ENCODE measurements at regions of chr3 and their contacts with region 1.

Region 1: DNA sequence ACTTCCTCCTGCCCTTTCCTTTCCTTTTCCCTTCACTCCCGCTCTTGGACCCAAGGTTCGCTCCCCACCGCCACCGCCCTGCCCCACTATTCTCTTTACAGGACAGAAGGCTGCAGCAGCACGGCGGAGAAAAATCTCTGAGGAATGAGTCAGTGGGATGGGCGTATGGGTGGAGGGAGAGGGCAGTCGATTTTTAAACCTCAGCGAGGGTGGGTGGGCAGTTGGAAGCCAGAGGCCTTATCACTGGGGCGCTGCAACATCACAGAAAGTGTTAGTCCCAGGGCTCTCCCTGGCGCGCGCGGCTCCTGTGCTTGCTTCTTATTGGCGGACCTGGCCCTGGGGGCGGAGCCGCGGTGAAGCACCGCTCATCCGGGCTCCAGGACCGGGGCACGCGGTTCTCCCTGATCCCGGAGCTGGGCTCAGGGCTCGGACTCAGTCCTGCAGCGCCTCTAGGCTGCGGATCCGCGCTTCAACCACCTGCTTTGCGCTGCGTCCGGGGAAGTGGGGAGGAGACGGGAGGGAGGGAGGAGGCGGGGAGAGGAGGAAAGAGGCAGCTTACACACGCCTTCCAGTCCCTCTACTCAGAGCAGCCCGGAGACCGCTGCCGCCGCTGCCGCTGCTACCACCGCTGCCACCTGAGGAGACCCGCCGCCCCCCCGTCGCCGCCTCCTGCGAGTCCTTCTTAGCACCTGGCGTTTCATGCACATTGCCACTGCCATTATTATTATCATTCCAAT is at the start of gene ALCAM:
- DNase-seq: peak; percentile 41 to 89 (median 63)
- ATAC-seq: peak; percentile 60
- H3K4me3 ChIP-seq: peak within 1 kb of the TSS; percentile 73
- H3K4me3 Mint-ChIP-seq: peak within 1 kb of the TSS; percentile 92
- H3K27ac ChIP-seq: peak within 1 kb of the TSS; percentile 76 to 85
- H3K27ac Mint-ChIP-seq: peak within 1 kb of the TSS; percentile 91
- H3K4me1 ChIP-seq: peaks cover 38% of the 10 kb centered on the region
- H3K4me1 Mint-ChIP-seq: peaks cover 32% of the 10 kb centered on the region
- H3K27me3 ChIP-seq: peaks cover 0 to 10% of the 10 kb centered on the region in 2 experiments
- H3K27me3 Mint-ChIP-seq: peaks cover 33% of the 10 kb centered on the region
- CTCF ChIP-seq: no peak
- total RNA-seq, gene ALCAM: 1.6 to 1.9 TPM

Region 2: DNA sequence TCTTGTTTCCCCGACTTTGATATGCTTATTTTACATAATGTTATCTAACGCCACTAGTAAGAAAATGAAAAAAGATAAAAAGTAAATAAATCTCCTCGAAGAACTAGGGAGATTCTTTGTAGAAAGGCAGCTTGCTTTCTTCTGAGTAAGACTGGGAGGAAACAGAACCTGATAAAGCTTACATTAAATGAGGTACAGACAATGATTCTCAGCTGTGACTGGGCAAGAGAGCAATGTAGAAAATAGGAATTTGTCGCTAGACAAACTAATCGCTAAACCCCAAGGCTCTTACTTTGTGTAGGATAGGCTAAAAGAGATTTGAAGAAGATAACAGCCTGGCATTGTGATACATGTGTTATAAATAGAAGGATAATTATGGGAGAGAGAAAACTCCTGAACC is 918.8 kb before region 1 on chr3:
- CTCF ChIA-PET with region 1: no interaction called
- POLR2A ChIA-PET with region 1: no interaction called
- intact Hi-C with region 1: no loop called
- DNase-seq: no peak
- ATAC-seq: no peak
- H3K4me3 ChIP-seq: no peak overlapping the region
- H3K4me3 Mint-ChIP-seq: no peak overlapping the region
- H3K27ac ChIP-seq: no peak overlapping the region
- H3K27ac Mint-ChIP-seq: no peak overlapping the region
- H3K4me1 ChIP-seq: no peaks in the 10 kb centered on the region
- H3K4me1 Mint-ChIP-seq: no peaks in the 10 kb centered on the region
- H3K27me3 ChIP-seq: no peaks in the 10 kb centered on the region
- H3K27me3 Mint-ChIP-seq: no peaks in the 10 kb centered on the region
- CTCF ChIP-seq: no peak

Region 3: DNA sequence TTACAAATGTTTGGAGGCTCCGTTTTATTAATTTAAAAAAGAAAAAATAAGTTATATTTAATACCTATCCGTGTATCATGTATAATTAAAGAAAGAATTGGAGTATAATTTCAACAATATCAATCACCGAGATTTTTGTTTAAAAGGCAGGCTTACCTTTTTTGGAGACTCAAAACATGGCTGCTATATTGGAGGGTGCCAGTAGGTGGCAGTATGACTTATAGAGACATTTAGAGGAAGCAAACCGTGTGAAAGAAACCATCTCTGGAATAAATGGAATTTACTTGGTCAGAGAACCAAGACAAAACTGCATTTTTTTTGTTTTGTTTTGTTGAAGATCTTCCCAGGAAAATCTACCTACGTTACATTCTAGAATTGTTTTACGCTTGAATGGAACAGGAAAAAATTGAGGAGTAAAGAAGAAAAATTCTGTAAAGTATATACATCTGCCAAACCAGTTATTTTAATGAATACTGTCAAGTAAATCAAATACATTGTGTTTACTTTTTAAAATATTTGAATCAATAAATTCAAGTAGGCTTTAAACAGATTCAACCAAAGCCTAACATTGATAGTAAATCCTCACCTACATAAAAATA is 802.4 kb before region 1 on chr3:
- CTCF ChIA-PET with region 1: no interaction called
- POLR2A ChIA-PET with region 1: no interaction called
- intact Hi-C with region 1: loop called (anchors 1 to 10 kb)
- DNase-seq: peak; percentile 22 to 67 (median 50)
- ATAC-seq: no peak
- H3K4me3 ChIP-seq: no peak overlapping the region
- H3K4me3 Mint-ChIP-seq: no peak overlapping the region
- H3K27ac ChIP-seq: no peak overlapping the region
- H3K27ac Mint-ChIP-seq: no peak overlapping the region
- H3K4me1 ChIP-seq: no peaks in the 10 kb centered on the region
- H3K4me1 Mint-ChIP-seq: no peaks in the 10 kb centered on the region
- H3K27me3 ChIP-seq: no peaks in the 10 kb centered on the region
- H3K27me3 Mint-ChIP-seq: peaks cover 5% of the 10 kb centered on the region
- CTCF ChIP-seq: peak; percentile 90

Region 4: GRCh38 chr3:104604369-104605010 is 762.0 kb before region 1 on chr3:
- CTCF ChIA-PET with region 1: no interaction called
- POLR2A ChIA-PET with region 1: no interaction called
- intact Hi-C with region 1: loop called in 1 of 2 experiments (anchors 10 kb)
- DNase-seq: no peak
- ATAC-seq: no peak
- H3K4me3 ChIP-seq: no peak overlapping the region
- H3K4me3 Mint-ChIP-seq: no peak overlapping the region
- H3K27ac ChIP-seq: no peak overlapping the region
- H3K27ac Mint-ChIP-seq: no peak overlapping the region
- H3K4me1 ChIP-seq: no peaks in the 10 kb centered on the region
- H3K4me1 Mint-ChIP-seq: no peaks in the 10 kb centered on the region
- H3K27me3 ChIP-seq: no peaks in the 10 kb centered on the region
- H3K27me3 Mint-ChIP-seq: peaks cover 11% of the 10 kb centered on the region
- CTCF ChIP-seq: no peak